ENCODE measurements at regions of chr21 and their contacts with region 1.

Region 1: DNA sequence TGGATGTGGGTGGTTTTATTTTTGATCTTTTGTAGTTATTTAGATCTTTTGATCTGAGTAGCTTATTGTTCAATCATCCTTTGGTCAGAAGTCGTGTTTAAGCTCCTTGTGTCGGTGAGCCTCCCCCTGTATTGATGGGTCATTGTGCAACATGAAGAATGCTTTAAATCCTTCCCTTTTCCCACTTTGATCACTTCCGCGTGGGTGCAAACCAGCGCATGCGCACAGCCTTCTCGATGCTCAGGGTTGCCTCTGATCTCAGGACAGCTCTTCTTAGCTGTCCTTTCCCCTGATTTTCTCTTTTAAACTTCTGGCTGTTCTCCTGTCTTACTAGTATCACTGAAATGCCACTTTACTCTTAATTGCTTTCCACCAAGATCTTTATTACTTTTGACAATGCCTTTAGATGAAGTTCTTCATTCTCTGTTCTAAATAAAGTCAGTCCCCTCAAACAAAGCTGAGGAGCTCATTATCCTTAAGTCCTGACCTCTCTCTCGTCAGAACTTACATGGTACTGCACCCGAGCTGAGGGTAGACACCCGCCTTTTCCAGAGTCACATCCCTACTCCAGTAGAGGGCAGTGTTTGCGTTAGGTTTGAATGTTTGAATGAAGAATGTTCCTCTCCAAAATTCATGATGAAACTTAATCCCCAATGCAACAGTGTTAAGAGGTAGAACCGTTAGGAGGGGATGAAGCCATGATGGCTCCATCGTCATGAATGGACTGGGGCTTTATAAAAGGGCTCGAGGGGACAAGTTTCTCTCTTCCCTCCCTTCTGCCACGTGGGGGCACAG is 547.9 kb upstream of the TMPRSS15 start:
- DNase-seq: no peak
- H3K4me3 Mint-ChIP-seq: no peak overlapping the region
- H3K27ac Mint-ChIP-seq: no peak overlapping the region
- H3K4me1 Mint-ChIP-seq: no peaks in the 10 kb centered on the region
- H3K27me3 Mint-ChIP-seq: no peaks in the 10 kb centered on the region

Region 2: GRCh38 chr21:18666725-18667124 is 284.7 kb before region 1 on chr21:
- CTCF ChIA-PET with region 1: no interaction called
- intact Hi-C with region 1: no loop called
- DNase-seq: no peak
- H3K4me3 Mint-ChIP-seq: no peak overlapping the region
- H3K27ac Mint-ChIP-seq: no peak overlapping the region
- H3K4me1 Mint-ChIP-seq: no peaks in the 10 kb centered on the region
- H3K27me3 Mint-ChIP-seq: no peaks in the 10 kb centered on the region

Region 3: GRCh38 chr21:20882462-20883407 is 1931.3 kb after region 1 on chr21:
- CTCF ChIA-PET with region 1: no interaction called
- intact Hi-C with region 1: loop called (anchors 10 kb)
- DNase-seq: peak; percentile 26
- H3K4me3 Mint-ChIP-seq: no peak overlapping the region
- H3K27ac Mint-ChIP-seq: no peak overlapping the region
- H3K4me1 Mint-ChIP-seq: no peaks in the 10 kb centered on the region
- H3K27me3 Mint-ChIP-seq: no peaks in the 10 kb centered on the region

Measured in activated naive CD4-positive, alpha-beta T cell treated with anti-CD3 and anti-CD28 coated beads for 36 hours (primary cell).